Breast epithelium (tissue), 4 donors: ENCODE measurements at regions of chr16 and their contacts with region 1.

Region 1: DNA sequence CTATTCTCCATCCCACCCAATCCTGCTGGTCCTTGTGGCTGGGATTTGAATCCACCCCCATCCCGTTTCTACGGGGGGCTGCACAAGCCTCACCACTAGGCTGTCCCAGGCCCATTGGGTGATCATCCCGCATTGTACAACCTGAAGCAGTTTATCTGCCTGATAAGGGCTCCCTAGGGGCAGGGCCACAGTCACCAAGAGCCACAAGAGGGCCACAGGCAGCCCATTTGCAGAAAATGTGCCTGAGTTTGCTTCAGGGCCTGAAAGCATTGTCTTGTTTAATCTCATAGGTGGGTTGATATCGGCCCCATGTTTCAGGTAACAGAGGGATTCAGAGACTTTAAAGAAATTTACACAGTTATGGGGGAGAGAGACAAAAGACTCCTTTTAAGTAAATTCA is 245.0 kb downstream of the CPPED1 start:
- DNase-seq: no peak
- H3K4me3 ChIP-seq: no peak overlapping the region
- H3K27ac ChIP-seq: no peak overlapping the region
- H3K4me1 ChIP-seq: no peaks in the 10 kb centered on the region
- H3K27me3 ChIP-seq: no peaks in the 10 kb centered on the region
- CTCF ChIP-seq: no peak
- POLR2A ChIP-seq: no peak

Region 2: DNA sequence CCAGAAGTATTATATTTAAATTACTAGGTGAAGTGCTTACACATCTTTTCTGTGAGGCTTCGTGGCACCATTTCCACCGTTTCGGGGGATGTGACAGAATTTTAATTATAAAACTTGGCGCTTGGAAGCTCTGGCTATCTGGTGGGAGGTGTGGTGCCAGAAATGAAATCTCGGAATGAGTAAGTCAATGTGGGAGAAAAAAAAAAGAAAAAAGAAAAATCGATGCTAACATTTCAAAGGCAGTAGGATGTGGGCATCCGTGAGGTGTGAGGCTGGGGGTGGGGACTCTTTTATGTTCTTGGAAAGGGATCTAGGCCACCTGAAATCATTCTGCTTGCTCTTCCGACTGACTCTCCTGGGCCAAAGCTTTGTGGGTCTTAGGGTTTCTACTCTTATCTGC is 223.1 kb after region 1 on chr16:
- intact Hi-C with region 1: loop called (anchors 5 kb)
- DNase-seq: no peak
- H3K4me3 ChIP-seq: no peak overlapping the region
- H3K27ac ChIP-seq: no peak overlapping the region
- H3K4me1 ChIP-seq: no peaks in the 10 kb centered on the region
- H3K27me3 ChIP-seq: no peaks in the 10 kb centered on the region
- CTCF ChIP-seq: no peak
- POLR2A ChIP-seq: no peak